AG04449 (cell line): ENCODE measurements at regions of chr17 and their contacts with region 1.

Region 1: GRCh38 chr17:8785547-8786413 is 13.4 kb downstream of the MFSD6L start:
- DNase-seq: no peak
- H3K4me3 ChIP-seq: no peak overlapping the region
- CTCF ChIP-seq: peak; percentile 88

Region 2: GRCh38 chr17:8383143-8383822 is 402.5 kb before region 1 on chr17 and contains the start of gene RPL26:
- CTCF ChIA-PET with region 1: interaction called, 21 read pairs
- POLR2A ChIA-PET with region 1: no interaction called
- DNase-seq: peak; percentile 90
- H3K4me3 ChIP-seq: peak within 1 kb of the TSS; percentile 75
- CTCF ChIP-seq: peak; percentile 77

Region 3: DNA sequence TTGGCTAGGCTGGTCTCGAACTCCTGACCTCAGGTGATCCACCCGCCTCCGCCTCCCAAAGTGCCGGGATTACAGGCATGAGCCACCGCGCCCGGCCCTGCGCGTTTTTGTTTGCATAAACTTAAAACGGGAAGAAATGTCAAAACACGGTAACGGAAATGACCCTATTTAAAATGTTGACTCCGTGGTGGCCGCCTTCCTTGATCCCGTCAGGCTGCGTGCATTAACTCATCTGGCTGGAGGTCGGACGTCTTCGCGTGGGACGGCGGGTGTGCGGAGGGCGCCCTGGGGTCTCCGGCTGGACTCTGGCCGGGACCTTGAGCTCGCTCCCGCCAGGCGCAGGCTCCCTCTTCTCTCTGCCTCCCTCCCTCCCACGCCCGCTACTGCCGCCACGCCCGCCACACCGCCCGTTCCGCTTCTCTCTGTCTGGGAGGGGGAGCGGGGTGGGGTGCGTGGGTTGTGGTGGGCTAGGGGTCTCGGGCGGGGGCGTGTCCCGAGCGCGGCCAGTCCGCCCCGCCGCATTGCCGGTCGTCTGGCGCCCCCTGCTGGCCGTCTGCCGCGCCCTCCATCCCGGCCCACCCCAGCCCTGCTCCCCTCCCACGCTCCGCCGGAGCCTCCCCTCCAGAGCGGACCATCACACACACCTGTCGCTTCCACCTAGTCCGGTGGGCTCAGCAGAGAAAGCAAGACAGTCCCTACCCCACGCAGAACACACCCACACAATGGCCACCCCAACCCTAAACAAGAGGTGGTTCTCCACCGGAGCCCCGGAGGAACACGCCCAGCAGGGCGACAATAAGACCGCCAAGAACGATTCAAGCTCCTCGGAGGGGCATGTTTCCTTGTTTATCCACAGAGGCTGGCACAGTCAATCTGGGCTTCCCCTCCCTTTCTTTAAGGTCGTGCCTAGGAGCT is 39.9 kb before region 1 on chr17:
- CTCF ChIA-PET with region 1: interaction called, 13 read pairs
- POLR2A ChIA-PET with region 1: no interaction called
- DNase-seq: no peak
- H3K4me3 ChIP-seq: peak overlapping the region; percentile 61
- CTCF ChIP-seq: peak; percentile 82

Region 4: DNA sequence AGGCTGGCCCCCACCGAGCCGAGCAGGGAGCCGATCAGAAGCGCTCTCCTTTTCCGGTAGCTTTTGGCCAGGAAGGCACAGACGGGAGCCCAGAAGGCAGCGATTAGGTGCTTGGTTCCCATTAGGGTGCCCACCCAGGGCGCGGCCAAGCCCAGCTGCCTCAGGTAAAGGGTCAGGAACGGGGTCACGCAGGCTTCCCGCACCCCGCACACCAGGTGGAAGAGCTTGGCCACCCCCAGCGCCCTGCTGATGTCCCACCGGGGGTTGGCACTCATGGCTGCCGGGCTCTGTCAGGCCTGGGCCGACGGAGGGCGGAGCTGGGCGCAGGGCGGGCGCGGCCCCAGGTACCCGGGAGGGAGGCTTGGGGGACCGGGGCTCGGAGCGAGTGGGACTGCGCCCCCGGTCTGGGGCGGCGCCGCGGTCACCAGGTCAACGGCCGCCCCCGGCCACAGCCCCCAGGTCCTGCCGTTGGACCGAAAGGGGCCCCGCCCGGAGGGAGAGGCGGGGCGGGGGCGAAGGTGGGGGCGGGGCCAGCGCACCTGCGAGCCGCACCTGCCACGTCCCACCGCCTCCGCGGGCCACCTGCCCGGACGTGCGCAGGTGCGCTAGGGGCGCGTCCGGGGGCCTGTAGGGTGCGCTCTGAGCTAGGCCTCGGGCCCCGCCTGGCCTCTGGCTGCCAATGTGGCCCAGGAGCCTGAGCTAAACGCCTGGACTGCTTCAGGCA is 13.2 kb after region 1 on chr17 and contains the start of gene MFSD6L:
- CTCF ChIA-PET with region 1: interaction called, 23 read pairs
- POLR2A ChIA-PET with region 1: no interaction called
- DNase-seq: no peak
- H3K4me3 ChIP-seq: no peak within 1 kb of the TSS
- CTCF ChIP-seq: no peak